Heart left ventricle (tissue), 16 donors: ENCODE measurements at regions of chr3 and their contacts with region 1.

Region 1: GRCh38 chr3:58013973-58014649 is 5.9 kb downstream of the FLNB start:
- DNase-seq: peak in 2 of 5 donors; percentile 60 to 63
- ATAC-seq: peak; percentile 25 to 72 (median 54)
- H3K4me3 ChIP-seq: no peak overlapping the region
- H3K27ac ChIP-seq: peak overlapping the region in 5 of 12 donors; percentile 26 to 87 (median 41)
- H3K4me1 ChIP-seq: peaks cover 0 to 94% (median 40%) of the 10 kb centered on the region in 12 donors
- H3K27me3 ChIP-seq: no peaks in the 10 kb centered on the region
- CTCF ChIP-seq: no peak
- POLR2A ChIP-seq: no peak

Region 2: GRCh38 chr3:57877116-57877515 is 137.0 kb before region 1 on chr3:
- intact Hi-C with region 1: no loop called
- DNase-seq: no peak
- ATAC-seq: no peak
- H3K4me3 ChIP-seq: no peak overlapping the region
- H3K27ac ChIP-seq: peak overlapping the region in 6 of 12 donors; percentile 16 to 37 (median 24)
- H3K4me1 ChIP-seq: peaks cover 0 to 16% (median 0%) of the 10 kb centered on the region in 12 donors
- H3K27me3 ChIP-seq: no peaks in the 10 kb centered on the region
- CTCF ChIP-seq: no peak
- POLR2A ChIP-seq: no peak

Region 3: GRCh38 chr3:57972531-57973111 is 41.5 kb before region 1 on chr3:
- intact Hi-C with region 1: no loop called
- DNase-seq: no peak
- ATAC-seq: peak in 1 of 4 donors; percentile 14
- H3K4me3 ChIP-seq: no peak overlapping the region
- H3K27ac ChIP-seq: peak overlapping the region; percentile 10 to 79 (median 54)
- H3K4me1 ChIP-seq: peaks cover 0 to 45% (median 19%) of the 10 kb centered on the region in 12 donors
- H3K27me3 ChIP-seq: no peaks in the 10 kb centered on the region
- CTCF ChIP-seq: no peak
- POLR2A ChIP-seq: no peak

Region 4: GRCh38 chr3:58052373-58053273 is 38.5 kb after region 1 on chr3:
- intact Hi-C with region 1: loop called in 3 of 10 experiments (anchors 5 kb)
- DNase-seq: peak; percentile 65 to 88 (median 83)
- ATAC-seq: peak; percentile 35 to 75 (median 66)
- H3K4me3 ChIP-seq: no peak overlapping the region
- H3K27ac ChIP-seq: peak overlapping the region; percentile 14 to 82 (median 65)
- H3K4me1 ChIP-seq: peaks cover 0 to 68% (median 48%) of the 10 kb centered on the region in 12 donors
- H3K27me3 ChIP-seq: no peaks in the 10 kb centered on the region
- CTCF ChIP-seq: no peak
- POLR2A ChIP-seq: no peak

Region 5: DNA sequence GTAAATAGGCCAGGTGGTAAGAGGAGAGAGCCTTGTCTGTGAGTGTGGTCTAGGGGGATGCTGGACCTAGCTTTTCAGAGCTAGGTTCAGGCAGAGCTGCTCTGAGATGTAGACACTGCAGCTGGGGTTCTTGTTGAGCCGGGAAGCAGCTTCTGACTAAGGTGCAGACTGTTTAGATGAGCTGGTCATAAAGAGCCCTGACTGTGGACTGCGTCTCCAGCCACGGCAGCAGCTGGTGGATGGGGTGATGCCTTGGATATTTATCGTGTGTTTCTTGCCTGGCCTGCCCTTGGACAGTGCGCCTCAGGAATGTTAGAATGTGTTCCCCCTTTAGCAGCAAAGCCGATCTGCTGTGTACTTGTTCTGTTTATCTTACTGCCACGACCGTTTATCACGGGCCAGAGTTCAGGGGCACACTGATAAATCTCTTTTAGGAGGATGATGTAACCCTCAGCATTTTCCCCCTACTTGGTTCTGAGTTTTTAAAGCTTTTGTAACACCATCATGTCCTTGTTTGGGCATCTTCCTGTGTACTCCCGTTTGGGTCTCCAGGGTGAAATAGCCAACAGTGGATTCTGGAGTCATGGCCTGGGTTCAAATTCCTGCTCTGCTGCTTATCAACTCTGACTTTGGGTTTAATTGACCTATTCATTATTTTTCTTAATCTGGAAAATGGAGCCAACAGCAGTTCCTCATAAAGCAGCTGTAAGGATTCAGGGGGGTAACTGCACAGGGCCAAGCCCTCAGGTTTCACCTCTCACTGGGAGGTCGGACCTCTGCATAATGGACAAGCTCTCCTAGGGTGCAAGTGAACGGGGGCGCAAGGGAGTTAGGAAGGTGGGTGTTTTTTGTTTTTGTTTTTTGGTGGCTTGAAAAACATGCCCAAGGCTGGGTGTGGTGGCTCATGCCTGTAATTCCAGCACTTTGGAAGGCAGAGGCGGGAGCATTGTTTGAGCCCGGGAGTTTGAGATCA is 45.5 kb after region 1 on chr3:
- intact Hi-C with region 1: loop called in 4 of 10 experiments (anchors 5 to 10 kb)
- DNase-seq: peak in 2 of 5 donors; percentile 31 to 50
- ATAC-seq: peak; percentile 58 to 75 (median 66)
- H3K4me3 ChIP-seq: no peak overlapping the region
- H3K27ac ChIP-seq: peak overlapping the region in 9 of 12 donors; percentile 4 to 82 (median 53)
- H3K4me1 ChIP-seq: peaks cover 0 to 61% (median 36%) of the 10 kb centered on the region in 12 donors
- H3K27me3 ChIP-seq: no peaks in the 10 kb centered on the region
- CTCF ChIP-seq: no peak
- POLR2A ChIP-seq: no peak

Region 6: GRCh38 chr3:58101499-58102389 is 87.6 kb after region 1 on chr3:
- intact Hi-C with region 1: no loop called
- DNase-seq: no peak
- ATAC-seq: no peak
- H3K4me3 ChIP-seq: no peak overlapping the region
- H3K27ac ChIP-seq: peak overlapping the region in 1 of 12 donors; percentile 74
- H3K4me1 ChIP-seq: peaks cover 0 to 9% (median 0%) of the 10 kb centered on the region in 12 donors
- H3K27me3 ChIP-seq: no peaks in the 10 kb centered on the region
- CTCF ChIP-seq: no peak
- POLR2A ChIP-seq: no peak

Region 7: DNA sequence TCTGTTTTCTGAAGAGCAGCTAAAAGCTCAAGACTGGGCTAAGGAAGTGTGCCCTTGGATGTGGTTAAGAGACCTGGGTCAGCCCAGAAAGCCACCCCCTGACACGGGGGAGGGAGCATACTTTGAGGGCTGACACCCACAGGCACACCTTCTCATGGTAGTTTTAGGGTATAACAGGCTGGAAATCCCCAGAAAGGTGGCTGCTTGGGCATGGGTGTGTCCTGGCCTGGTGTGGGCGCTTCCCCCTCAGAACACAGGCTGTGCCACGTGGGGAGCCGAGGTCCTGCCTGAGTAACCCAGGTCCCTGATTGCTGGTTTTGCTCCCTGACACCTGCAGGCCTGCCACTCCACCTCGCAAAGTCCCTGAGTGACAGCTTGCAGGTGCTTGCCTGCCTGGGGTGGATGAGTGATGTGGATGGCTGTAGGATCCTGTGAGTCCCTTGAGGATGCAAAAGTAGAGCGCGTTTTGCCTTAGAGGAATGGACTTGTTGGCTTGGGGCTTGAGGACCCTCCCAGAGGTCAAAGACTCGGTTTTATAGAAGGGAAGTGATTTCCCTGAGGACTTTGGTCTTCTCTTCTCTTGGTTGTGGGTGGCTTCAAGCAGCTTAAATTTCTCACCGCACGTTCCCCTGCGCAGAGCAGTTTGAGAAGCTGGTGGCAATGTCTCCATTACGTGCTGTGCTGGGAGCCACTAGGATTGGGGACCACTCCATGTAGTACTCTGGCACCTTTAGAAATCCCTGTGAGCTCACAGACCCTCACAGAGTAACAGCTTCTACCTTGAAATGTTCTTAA is 102.2 kb after region 1 on chr3:
- intact Hi-C with region 1: loop called in 4 of 10 experiments (anchors 5 to 10 kb)
- DNase-seq: no peak
- ATAC-seq: no peak
- H3K4me3 ChIP-seq: no peak overlapping the region
- H3K27ac ChIP-seq: peak overlapping the region in 4 of 12 donors; percentile 2 to 61 (median 41)
- H3K4me1 ChIP-seq: peaks cover 0 to 50% (median 29%) of the 10 kb centered on the region in 12 donors
- H3K27me3 ChIP-seq: no peaks in the 10 kb centered on the region
- CTCF ChIP-seq: no peak
- POLR2A ChIP-seq: no peak